ENCODE measurements at regions of chr1 and their contacts with region 1.

Region 1: DNA sequence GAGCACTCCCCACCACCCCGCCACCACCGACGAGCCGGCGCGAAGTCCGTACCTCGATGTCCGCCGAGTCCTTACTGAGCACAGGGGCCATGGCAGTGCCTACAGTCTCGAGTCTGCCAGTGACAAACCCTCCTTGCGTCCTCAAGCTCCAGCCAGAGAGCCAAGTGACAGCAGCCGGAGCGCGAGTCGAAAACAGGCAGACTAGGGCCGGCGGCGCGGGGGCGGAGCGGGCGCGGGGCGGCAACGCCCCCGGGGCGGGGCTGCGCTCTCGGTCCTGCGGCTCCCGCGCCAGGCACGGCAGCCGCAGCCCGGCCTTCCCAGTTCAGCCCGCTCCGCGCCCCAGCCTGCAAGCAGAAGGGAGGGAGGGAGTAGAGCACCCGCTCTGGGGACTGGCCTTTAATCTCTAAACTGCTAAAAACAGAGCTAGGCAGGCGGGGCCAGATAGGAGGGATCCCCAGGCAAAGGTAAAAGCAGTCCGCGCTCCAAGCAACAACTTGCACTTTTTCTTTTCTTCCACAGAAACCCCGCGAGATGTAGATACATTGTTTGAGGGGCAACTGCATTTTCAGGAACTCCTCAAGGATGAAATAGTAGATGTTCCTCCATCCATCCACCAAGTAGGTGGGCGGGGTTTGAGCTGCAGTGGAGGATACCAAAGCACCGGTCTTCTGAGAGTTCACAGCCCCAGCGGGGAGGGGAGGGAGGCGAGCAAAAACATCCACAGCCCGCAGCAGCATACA is at the start of gene DPYD:
- DNase-seq: peak; percentile 42
- ATAC-seq: peak; percentile 90
- H3K4me3 ChIP-seq: peak within 1 kb of the TSS; percentile 88
- H3K27ac ChIP-seq: peak within 1 kb of the TSS; percentile 81
- H3K4me1 ChIP-seq: peaks cover 2% of the 10 kb centered on the region; the same call in 1 of the 2 replicates
- H3K27me3 ChIP-seq: no peaks in the 10 kb centered on the region
- CTCF ChIP-seq: no peak
- EP300 ChIP-seq: no peak
- POLR2A ChIP-seq: peak; percentile 96
- RAD21 ChIP-seq: 0 out of 2 replicates have a peak, but pooled peaks have one; percentile 10
- polyA plus RNA-seq, gene DPYD: 5.7 to 6.5 TPM

Region 2: GRCh38 chr1:96721416-96722160 is 1199.4 kb before region 1 on chr1 and contains the start of gene PTBP2:
- CTCF ChIA-PET with region 1: no interaction called
- POLR2A ChIA-PET with region 1: no interaction called
- RAD21 ChIA-PET with region 1: no interaction called
- SMC1A ChIA-PET with region 1: no interaction called
- in situ Hi-C with region 1: no loop called
- intact Hi-C with region 1: loop called (anchors 10 kb)
- DNase-seq: peak; percentile 25
- ATAC-seq: peak; percentile 96
- H3K4me3 ChIP-seq: peak within 1 kb of the TSS; percentile 90
- H3K27ac ChIP-seq: peak within 1 kb of the TSS; percentile 64
- H3K4me1 ChIP-seq: peaks cover 4% of the 10 kb centered on the region
- H3K27me3 ChIP-seq: no peaks in the 10 kb centered on the region
- CTCF ChIP-seq: no peak
- EP300 ChIP-seq: no peak
- POLR2A ChIP-seq: peak; percentile 85
- RAD21 ChIP-seq: no peak
- polyA plus RNA-seq, gene PTBP2: 5.8 to 9.7 TPM

Region 3: GRCh38 chr1:97451046-97451826 is 469.8 kb before region 1 on chr1:
- CTCF ChIA-PET with region 1: no interaction called
- POLR2A ChIA-PET with region 1: no interaction called
- RAD21 ChIA-PET with region 1: no interaction called
- SMC1A ChIA-PET with region 1: no interaction called
- in situ Hi-C with region 1: no loop called
- intact Hi-C with region 1: no loop called
- DNase-seq: no peak
- ATAC-seq: no peak
- H3K4me3 ChIP-seq: no peak overlapping the region
- H3K27ac ChIP-seq: no peak overlapping the region
- H3K4me1 ChIP-seq: no peaks in the 10 kb centered on the region
- H3K27me3 ChIP-seq: no peaks in the 10 kb centered on the region
- CTCF ChIP-seq: no peak
- EP300 ChIP-seq: no peak
- POLR2A ChIP-seq: no peak
- RAD21 ChIP-seq: no peak

Region 4: DNA sequence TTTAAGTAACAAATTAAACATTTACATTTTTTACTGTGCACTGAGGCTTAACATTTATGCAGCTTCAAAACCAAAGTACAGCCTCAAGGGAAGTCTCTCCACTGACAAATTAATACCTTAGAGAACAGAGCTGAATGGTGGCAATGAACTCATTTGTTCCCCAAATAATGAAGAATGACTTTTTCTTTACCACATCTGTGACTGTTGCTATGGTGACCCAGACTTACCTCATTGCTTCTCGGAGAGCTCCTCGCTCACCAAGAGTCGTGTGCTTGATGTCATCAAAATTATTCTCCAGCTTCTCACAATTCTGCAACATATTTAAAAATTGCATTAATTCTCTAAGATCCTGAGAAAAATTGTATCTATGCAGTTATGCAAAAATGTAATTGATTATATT is 93.1 kb before region 1 on chr1:
- CTCF ChIA-PET with region 1: interaction called, 13 read pairs
- POLR2A ChIA-PET with region 1: interaction called, 6 read pairs
- RAD21 ChIA-PET with region 1: interaction called, 8 read pairs
- SMC1A ChIA-PET with region 1: interaction called, 22 read pairs
- in situ Hi-C with region 1: no loop called
- intact Hi-C with region 1: no loop called
- DNase-seq: no peak
- ATAC-seq: peak; percentile 92
- H3K4me3 ChIP-seq: no peak overlapping the region
- H3K27ac ChIP-seq: no peak overlapping the region
- H3K4me1 ChIP-seq: no peaks in the 10 kb centered on the region
- H3K27me3 ChIP-seq: no peaks in the 10 kb centered on the region
- CTCF ChIP-seq: no peak
- EP300 ChIP-seq: no peak
- POLR2A ChIP-seq: no peak
- RAD21 ChIP-seq: no peak

Region 5: DNA sequence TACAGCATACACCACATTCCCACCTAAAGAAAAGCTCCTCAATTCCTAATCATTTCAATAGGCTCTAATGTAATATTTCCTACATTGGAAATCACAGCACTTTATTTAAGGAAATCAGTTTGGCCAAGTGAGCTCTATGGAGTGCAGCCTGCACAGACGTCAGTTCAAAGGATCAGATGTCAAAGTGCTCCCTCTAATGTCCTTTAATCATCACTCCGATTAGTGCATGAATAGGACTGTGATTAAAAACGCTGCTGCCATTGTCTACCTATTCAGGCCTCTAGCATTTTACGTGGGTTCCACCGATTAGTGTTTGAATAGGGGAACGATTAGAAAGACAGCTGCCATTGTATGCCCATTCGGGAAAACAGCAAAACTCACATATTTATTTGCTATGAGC is 50.4 kb before region 1 on chr1:
- CTCF ChIA-PET with region 1: no interaction called
- POLR2A ChIA-PET with region 1: no interaction called
- RAD21 ChIA-PET with region 1: interaction called, 3 read pairs
- SMC1A ChIA-PET with region 1: interaction called, 3 read pairs
- in situ Hi-C with region 1: no loop called
- intact Hi-C with region 1: loop called (anchors 5 kb)
- DNase-seq: no peak
- ATAC-seq: no peak
- H3K4me3 ChIP-seq: no peak overlapping the region
- H3K27ac ChIP-seq: no peak overlapping the region
- H3K4me1 ChIP-seq: no peaks in the 10 kb centered on the region
- H3K27me3 ChIP-seq: no peaks in the 10 kb centered on the region
- CTCF ChIP-seq: no peak
- EP300 ChIP-seq: no peak
- POLR2A ChIP-seq: no peak
- RAD21 ChIP-seq: no peak

Region 6: GRCh38 chr1:97901017-97901658 is 19.9 kb before region 1 on chr1:
- CTCF ChIA-PET with region 1: interaction called, 4 read pairs
- POLR2A ChIA-PET with region 1: interaction called, 3 read pairs
- RAD21 ChIA-PET with region 1: interaction called, 15 read pairs
- SMC1A ChIA-PET with region 1: interaction called, 18 read pairs
- in situ Hi-C with region 1: no loop called
- intact Hi-C with region 1: no loop called
- DNase-seq: no peak
- ATAC-seq: no peak
- H3K4me3 ChIP-seq: no peak overlapping the region
- H3K27ac ChIP-seq: no peak overlapping the region
- H3K4me1 ChIP-seq: no peaks in the 10 kb centered on the region
- H3K27me3 ChIP-seq: no peaks in the 10 kb centered on the region
- CTCF ChIP-seq: no peak
- EP300 ChIP-seq: no peak
- POLR2A ChIP-seq: no peak
- RAD21 ChIP-seq: no peak

Region 7: DNA sequence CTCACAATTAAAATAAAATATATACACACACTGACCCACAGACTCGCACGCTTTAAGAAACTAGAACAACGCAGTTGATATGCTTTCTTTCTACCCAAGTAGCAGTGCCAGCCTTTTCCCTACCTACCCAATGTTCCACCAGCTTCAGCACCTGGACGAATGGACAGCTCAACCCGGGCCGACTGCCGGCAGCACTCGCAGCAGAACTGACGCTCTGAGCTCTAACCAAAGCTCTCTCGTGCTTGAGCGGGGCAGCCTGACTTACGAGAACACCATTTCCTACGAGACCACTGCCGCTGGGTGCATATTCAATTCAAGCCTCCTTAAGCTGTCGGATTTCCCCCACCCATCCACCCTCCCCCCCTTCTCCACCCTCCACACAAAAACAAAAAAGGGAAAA is 127.2 kb after region 1 on chr1:
- CTCF ChIA-PET with region 1: interaction called, 3 read pairs
- POLR2A ChIA-PET with region 1: no interaction called
- RAD21 ChIA-PET with region 1: interaction called, 10 read pairs
- SMC1A ChIA-PET with region 1: interaction called, 3 read pairs
- in situ Hi-C with region 1: no loop called
- intact Hi-C with region 1: no loop called
- DNase-seq: no peak
- ATAC-seq: peak; percentile 88
- H3K4me3 ChIP-seq: no peak overlapping the region
- H3K27ac ChIP-seq: no peak overlapping the region
- H3K4me1 ChIP-seq: no peaks in the 10 kb centered on the region
- H3K27me3 ChIP-seq: peaks cover 11 to 24% of the 10 kb centered on the region in 2 experiments
- CTCF ChIP-seq: no peak
- EP300 ChIP-seq: no peak
- POLR2A ChIP-seq: no peak
- RAD21 ChIP-seq: no peak

Measured in GM12878 (cell line).